Activated CD4-positive, alpha-beta memory T cell treated with anti-CD3 and anti-CD28 coated beads for 36 hours (primary cell): ENCODE measurements at regions of chr10 and their contacts with region 1.

Region 1: DNA sequence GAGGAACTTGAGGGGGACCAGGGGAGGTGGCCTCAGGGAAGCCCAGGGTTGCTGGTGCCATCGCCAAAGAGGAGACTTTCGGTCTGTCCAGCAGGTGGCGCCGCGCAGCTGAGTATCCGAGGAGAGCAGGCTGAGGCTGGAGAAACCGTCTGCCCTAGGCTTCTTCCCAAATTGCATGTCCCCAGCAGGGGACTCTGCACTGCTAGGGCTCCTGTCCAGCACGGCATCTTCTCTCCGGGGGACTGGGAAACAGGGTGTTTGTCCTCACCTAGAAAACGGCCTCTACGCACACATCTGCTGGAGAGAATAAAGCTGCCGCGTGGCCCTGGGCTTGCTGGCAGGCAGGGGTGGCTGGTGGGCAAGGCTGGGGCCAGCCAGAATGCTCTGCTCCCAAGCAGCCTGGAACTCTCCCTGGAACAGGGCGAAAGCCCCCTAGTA is 161.9 kb downstream of the SH2D4B start:
- DNase-seq: peak; percentile 80
- H3K4me3 Mint-ChIP-seq: no peak overlapping the region
- H3K27ac Mint-ChIP-seq: no peak overlapping the region
- H3K4me1 Mint-ChIP-seq: no peaks in the 10 kb centered on the region
- H3K27me3 Mint-ChIP-seq: no peaks in the 10 kb centered on the region

Region 2: DNA sequence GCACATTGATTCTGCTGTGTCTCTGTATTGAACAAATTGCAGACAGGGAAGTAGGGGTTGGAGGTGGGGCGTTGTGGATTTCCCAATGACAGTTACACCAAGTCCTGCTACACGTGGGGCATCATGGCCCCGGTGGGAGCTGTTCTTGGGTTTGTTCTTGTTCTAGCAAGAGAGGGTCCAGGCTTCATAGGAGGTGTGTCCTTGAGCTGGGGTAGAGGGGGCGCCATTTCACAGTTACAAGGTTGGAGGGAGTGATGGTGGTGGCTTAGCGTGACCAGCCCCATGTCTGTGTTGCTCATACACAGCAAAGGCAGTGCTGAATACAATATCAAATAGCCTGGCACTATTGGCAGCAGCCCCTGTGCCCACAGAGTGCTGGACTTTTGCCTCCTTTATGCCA is 146.2 kb before region 1 on chr10:
- CTCF ChIA-PET with region 1: no interaction called
- POLR2A ChIA-PET with region 1: no interaction called
- intact Hi-C with region 1: no loop called
- DNase-seq: no peak
- H3K4me3 Mint-ChIP-seq: no peak overlapping the region
- H3K27ac Mint-ChIP-seq: no peak overlapping the region
- H3K4me1 Mint-ChIP-seq: peaks cover 2% of the 10 kb centered on the region
- H3K27me3 Mint-ChIP-seq: peaks cover 2% of the 10 kb centered on the region

Region 3: GRCh38 chr10:80662577-80663261 is 36.9 kb before region 1 on chr10:
- CTCF ChIA-PET with region 1: interaction called, 21 read pairs
- POLR2A ChIA-PET with region 1: no interaction called
- intact Hi-C with region 1: no loop called
- DNase-seq: peak; percentile 80
- H3K4me3 Mint-ChIP-seq: peak overlapping the region; percentile 41
- H3K27ac Mint-ChIP-seq: no peak overlapping the region
- H3K4me1 Mint-ChIP-seq: peaks cover 4% of the 10 kb centered on the region
- H3K27me3 Mint-ChIP-seq: peaks cover 15% of the 10 kb centered on the region

Region 4: DNA sequence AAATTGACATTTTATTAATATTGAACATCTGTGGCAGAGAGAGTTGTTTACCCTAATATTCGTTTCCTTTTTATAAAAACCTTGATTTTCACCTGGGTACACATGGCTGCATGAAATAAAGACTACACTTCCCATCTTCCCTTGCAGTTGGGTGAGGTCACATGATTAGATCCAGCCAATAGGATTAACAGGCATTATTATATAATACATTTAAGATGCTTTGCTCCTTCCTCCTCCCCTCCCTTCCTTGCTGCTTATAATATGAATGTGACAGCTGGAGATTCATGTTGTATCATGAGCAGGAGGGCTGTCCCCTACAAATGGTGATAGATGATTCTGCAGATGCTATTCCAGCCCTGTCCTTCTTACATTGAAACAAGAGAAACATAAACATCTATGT is 15.4 kb before region 1 on chr10:
- CTCF ChIA-PET with region 1: interaction called, 13 read pairs
- POLR2A ChIA-PET with region 1: no interaction called
- intact Hi-C with region 1: no loop called
- DNase-seq: no peak
- H3K4me3 Mint-ChIP-seq: no peak overlapping the region
- H3K27ac Mint-ChIP-seq: no peak overlapping the region
- H3K4me1 Mint-ChIP-seq: no peaks in the 10 kb centered on the region
- H3K27me3 Mint-ChIP-seq: no peaks in the 10 kb centered on the region

Region 5: GRCh38 chr10:80713398-80713928 is 13.8 kb after region 1 on chr10:
- CTCF ChIA-PET with region 1: interaction called, 23 read pairs
- POLR2A ChIA-PET with region 1: no interaction called
- intact Hi-C with region 1: no loop called
- DNase-seq: no peak
- H3K4me3 Mint-ChIP-seq: no peak overlapping the region
- H3K27ac Mint-ChIP-seq: no peak overlapping the region
- H3K4me1 Mint-ChIP-seq: no peaks in the 10 kb centered on the region
- H3K27me3 Mint-ChIP-seq: no peaks in the 10 kb centered on the region

Region 6: DNA sequence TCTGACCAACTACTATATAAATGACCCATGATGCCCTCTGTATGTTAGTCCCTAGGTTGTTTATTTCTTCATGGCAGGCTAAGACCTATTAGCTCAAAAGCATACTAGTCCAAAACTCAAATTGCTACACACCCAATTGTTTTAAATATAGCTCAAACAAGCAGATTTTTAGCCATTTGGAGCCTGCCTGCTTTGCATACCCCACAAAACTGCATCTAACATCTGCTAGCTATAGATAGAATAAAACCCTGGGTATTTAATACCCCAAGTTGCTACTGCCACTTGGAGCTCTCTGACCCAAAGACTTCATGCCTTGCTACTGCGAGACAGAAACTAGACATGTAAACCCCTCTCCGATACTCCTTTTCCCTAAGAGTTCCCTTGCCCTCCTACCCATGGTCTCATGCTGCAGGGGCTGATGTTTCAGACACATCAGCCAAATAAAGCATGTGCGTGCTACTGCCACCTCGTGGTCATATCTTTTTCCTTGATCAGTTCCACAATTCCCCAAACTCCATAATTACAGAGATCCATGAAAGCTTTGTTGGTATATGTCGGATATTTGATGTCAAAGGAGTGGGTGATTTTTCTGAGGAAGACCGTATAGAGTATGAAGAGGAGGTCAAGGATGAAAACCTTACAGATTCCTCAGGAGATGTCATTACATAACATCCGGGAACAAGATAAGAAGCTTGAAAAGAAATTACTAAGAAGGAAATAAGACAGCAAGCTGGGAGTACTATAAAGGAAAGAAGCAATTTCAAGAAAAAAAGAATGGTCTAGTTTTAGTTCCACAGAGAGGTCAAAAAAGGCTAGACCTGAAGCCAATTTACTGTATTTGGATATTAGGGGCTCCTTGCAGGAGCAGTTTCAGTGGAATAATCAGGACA is 224.7 kb after region 1 on chr10:
- CTCF ChIA-PET with region 1: interaction called, 22 read pairs
- POLR2A ChIA-PET with region 1: no interaction called
- intact Hi-C with region 1: loop called (anchors 1 kb)
- DNase-seq: peak; percentile 26
- H3K4me3 Mint-ChIP-seq: no peak overlapping the region
- H3K27ac Mint-ChIP-seq: no peak overlapping the region
- H3K4me1 Mint-ChIP-seq: no peaks in the 10 kb centered on the region
- H3K27me3 Mint-ChIP-seq: peaks cover 3% of the 10 kb centered on the region

Region 7: DNA sequence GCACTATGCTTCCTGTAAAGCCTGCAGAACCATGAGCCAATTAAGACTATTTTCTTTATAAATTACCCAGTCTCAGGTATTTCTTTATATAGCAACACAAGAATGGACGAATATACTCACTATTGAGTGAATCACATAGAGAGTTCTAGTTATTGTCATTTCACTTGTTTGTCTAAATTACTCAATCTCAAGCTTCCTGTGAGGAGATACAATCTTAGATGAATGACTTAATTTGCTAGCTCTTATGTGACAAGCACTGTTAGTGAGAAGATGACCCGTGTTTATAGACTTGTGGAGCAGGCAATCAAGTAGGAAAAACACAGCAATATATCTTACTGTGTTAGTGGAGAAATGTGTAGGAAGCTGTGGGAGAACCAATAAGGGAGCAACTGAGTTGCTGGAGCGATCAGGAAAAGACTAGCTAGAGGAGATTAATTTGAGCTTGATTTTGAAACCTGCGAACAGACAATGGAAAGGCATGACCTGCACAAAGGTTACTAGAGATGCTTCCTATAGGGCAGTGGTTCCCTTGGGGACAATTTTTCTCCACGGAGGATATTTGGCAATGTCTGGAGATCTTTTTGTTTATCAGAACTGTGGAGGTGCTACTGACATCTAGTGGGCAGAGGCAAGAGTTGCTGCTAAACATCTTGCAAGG is 319.2 kb after region 1 on chr10:
- CTCF ChIA-PET with region 1: interaction called, 5 read pairs
- POLR2A ChIA-PET with region 1: no interaction called
- intact Hi-C with region 1: loop called (anchors 1 kb)
- DNase-seq: no peak
- H3K4me3 Mint-ChIP-seq: no peak overlapping the region
- H3K27ac Mint-ChIP-seq: no peak overlapping the region
- H3K4me1 Mint-ChIP-seq: peaks cover 4% of the 10 kb centered on the region
- H3K27me3 Mint-ChIP-seq: peaks cover 3% of the 10 kb centered on the region